Activated T-helper 1 cell treated with anti-CD3 and anti-CD28 coated beads, Interleukin-12 subunit alpha, Interleukin-12 subunit beta, Interleukin-2, Interleukin-4 antibody, amounts not matched to agents 30 ng/mL and 10 ng/mL and 1 ng/mL, durations not matched to agents 14 hours and 24 hours and 36 hours (primary cell): ENCODE measurements at regions of chr3 and their contacts with region 1.

Region 1: GRCh38 chr3:30847592-30847991 is 46.9 kb downstream of the GADL1 start:
- DNase-seq: no peak
- H3K4me3 Mint-ChIP-seq: no peak overlapping the region
- H3K27ac Mint-ChIP-seq: no peak overlapping the region
- H3K4me1 Mint-ChIP-seq: peaks cover 30% of the 10 kb centered on the region
- H3K27me3 Mint-ChIP-seq: no peaks in the 10 kb centered on the region

Region 2: GRCh38 chr3:30819067-30819798 is 28.4 kb before region 1 on chr3:
- intact Hi-C with region 1: loop called (anchors 2 kb)
- DNase-seq: no peak
- H3K4me3 Mint-ChIP-seq: no peak overlapping the region
- H3K27ac Mint-ChIP-seq: no peak overlapping the region
- H3K4me1 Mint-ChIP-seq: peaks cover 10% of the 10 kb centered on the region
- H3K27me3 Mint-ChIP-seq: peaks cover 3% of the 10 kb centered on the region